ENCODE measurements at regions of chr18 and their contacts with region 1.

Region 1: GRCh38 chr18:58400337-58400870 is 228.5 kb downstream of the ALPK2 start:
- DNase-seq: no peak
- ATAC-seq: no peak
- H3K4me3 Mint-ChIP-seq: no peak overlapping the region
- H3K27ac Mint-ChIP-seq: no peak overlapping the region
- H3K4me1 Mint-ChIP-seq: peaks cover 8% of the 10 kb centered on the region
- H3K27me3 Mint-ChIP-seq: no peaks in the 10 kb centered on the region
- CTCF ChIP-seq: peak; percentile 5

Region 2: DNA sequence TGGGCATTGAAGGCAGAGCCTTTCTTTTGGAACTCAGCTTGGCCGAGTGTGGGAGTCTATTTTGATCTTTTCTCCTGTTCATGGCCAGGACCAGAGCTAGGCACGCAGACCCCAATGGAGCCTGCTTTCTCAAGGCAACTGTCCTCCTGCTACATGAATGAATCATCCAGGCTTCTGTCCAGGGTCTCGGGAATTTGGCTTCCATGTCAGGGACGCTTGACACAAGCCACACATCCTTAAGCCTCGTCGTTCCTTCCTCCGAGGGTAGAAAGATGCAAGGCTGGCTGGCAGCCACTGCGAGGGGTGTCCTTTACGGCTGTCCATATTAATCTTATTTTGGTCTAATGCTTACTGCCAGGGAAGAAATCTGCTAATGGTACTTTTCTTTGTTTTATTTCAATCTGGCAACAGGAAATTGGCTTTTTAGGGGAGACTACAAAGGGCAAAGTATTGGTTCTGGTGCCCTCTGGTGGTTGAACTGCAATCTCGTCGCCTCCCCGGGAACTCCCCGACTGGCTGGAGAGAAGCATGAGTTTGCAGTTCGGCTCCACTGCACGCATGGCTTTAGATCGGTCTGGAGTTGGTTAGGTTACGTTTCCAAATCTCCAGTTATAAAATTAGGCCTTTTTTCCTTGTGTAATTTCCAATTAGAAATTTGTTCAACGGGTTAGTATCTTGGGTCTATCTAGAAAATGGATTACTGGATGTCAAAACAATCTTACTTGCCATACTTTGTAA is 93.3 kb after region 1 on chr18:
- CTCF ChIA-PET with region 1: interaction called, 5 read pairs
- POLR2A ChIA-PET with region 1: no interaction called
- intact Hi-C with region 1: loop called (anchors 2 kb)
- DNase-seq: peak; percentile 82
- ATAC-seq: peak; percentile 98
- H3K4me3 Mint-ChIP-seq: no peak overlapping the region
- H3K27ac Mint-ChIP-seq: no peak overlapping the region
- H3K4me1 Mint-ChIP-seq: peaks cover 6% of the 10 kb centered on the region
- H3K27me3 Mint-ChIP-seq: peaks cover 21% of the 10 kb centered on the region
- CTCF ChIP-seq: peak; percentile 95

Region 3: GRCh38 chr18:58505181-58505580 is 104.8 kb after region 1 on chr18:
- CTCF ChIA-PET with region 1: no interaction called
- POLR2A ChIA-PET with region 1: no interaction called
- intact Hi-C with region 1: no loop called
- DNase-seq: peak; percentile 59
- ATAC-seq: peak; percentile 80
- H3K4me3 Mint-ChIP-seq: no peak overlapping the region
- H3K27ac Mint-ChIP-seq: no peak overlapping the region
- H3K4me1 Mint-ChIP-seq: peaks cover 12% of the 10 kb centered on the region
- H3K27me3 Mint-ChIP-seq: no peaks in the 10 kb centered on the region
- CTCF ChIP-seq: no peak

Measured in activated CD8-positive, alpha-beta T cell treated with anti-CD3 and anti-CD28 coated beads for 36 hours (primary cell).